ENCODE measurements at regions of chr17 and their contacts with region 1.

Region 1: GRCh38 chr17:47615766-47616424 is 33.8 kb upstream of the KPNB1 start:
- DNase-seq: no peak
- H3K4me3 Mint-ChIP-seq: no peak overlapping the region
- H3K27ac Mint-ChIP-seq: no peak overlapping the region
- H3K4me1 Mint-ChIP-seq: peaks cover 16% of the 10 kb centered on the region
- H3K27me3 Mint-ChIP-seq: no peaks in the 10 kb centered on the region

Region 2: DNA sequence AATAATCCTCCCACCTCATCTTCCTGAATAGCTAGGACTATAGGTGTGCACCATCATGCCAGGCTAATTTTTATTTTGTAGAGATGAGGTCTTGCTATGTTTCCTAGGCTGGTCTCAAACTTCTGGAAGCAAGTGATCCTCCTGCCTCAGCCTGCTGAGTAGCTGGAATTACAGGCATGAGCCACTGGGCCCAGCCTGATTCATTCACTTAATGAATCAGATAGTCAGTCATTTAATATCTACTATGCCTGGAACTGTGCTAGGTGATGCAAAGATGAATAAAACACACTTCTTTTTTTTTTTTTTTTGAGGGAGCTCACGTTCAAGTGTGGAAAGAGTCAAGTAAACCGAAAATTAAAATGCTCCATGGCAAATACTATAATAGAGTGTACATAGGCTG is 252.7 kb before region 1 on chr17:
- CTCF ChIA-PET with region 1: interaction called, 21 read pairs
- POLR2A ChIA-PET with region 1: no interaction called
- intact Hi-C with region 1: loop called (anchors 2 kb)
- DNase-seq: no peak
- H3K4me3 Mint-ChIP-seq: no peak overlapping the region
- H3K27ac Mint-ChIP-seq: no peak overlapping the region
- H3K4me1 Mint-ChIP-seq: no peaks in the 10 kb centered on the region
- H3K27me3 Mint-ChIP-seq: no peaks in the 10 kb centered on the region

Region 3: GRCh38 chr17:47644324-47644723 is 28.4 kb after region 1 on chr17:
- CTCF ChIA-PET with region 1: interaction called, 16 read pairs
- POLR2A ChIA-PET with region 1: interaction called, 4 read pairs
- intact Hi-C with region 1: loop called (anchors 1 kb)
- DNase-seq: no peak
- H3K4me3 Mint-ChIP-seq: no peak overlapping the region
- H3K27ac Mint-ChIP-seq: no peak overlapping the region
- H3K4me1 Mint-ChIP-seq: peaks cover 14% of the 10 kb centered on the region
- H3K27me3 Mint-ChIP-seq: no peaks in the 10 kb centered on the region

Region 4: DNA sequence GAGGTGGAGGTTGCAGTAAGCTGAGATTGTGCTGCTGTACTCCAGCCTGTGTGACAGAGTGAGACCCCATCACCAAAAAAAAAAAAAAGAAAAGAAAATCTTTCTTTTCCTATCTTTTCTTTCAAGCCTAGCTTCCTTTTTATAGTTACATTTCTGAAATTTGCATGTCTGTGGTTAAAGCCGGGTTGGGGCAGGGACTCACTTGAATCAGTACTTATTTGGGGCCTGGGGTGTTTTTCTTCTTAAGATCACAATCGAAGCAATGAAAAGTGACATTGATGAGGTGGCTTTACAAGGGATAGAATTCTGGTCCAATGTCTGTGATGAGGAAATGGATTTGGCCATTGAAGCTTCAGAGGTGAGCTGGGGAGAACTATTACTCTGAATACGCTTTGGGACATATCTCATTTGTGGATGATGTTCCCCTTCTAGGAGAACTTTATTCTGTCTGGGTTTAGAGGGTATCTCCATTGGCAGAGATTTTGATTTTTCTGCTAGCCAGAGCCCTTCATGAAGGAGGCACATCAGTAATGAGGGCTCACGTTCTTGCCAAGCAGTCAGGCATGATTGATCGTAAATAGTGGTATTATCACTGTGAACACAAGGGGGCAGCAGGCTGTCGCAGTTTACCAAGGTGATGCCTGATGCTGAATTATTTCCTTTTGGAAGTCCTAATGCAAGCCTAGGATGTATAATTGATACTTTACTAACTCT is 48.2 kb after region 1 on chr17:
- CTCF ChIA-PET with region 1: interaction called, 3 read pairs
- POLR2A ChIA-PET with region 1: no interaction called
- intact Hi-C with region 1: loop called (anchors 1 kb)
- DNase-seq: peak; percentile 71
- H3K4me3 Mint-ChIP-seq: no peak overlapping the region
- H3K27ac Mint-ChIP-seq: peak overlapping the region; percentile 80
- H3K4me1 Mint-ChIP-seq: peaks cover 31% of the 10 kb centered on the region
- H3K27me3 Mint-ChIP-seq: no peaks in the 10 kb centered on the region

Region 5: GRCh38 chr17:47687748-47688147 is 71.9 kb after region 1 on chr17:
- CTCF ChIA-PET with region 1: no interaction called
- POLR2A ChIA-PET with region 1: no interaction called
- intact Hi-C with region 1: no loop called
- DNase-seq: no peak
- H3K4me3 Mint-ChIP-seq: no peak overlapping the region
- H3K27ac Mint-ChIP-seq: no peak overlapping the region
- H3K4me1 Mint-ChIP-seq: peaks cover 30% of the 10 kb centered on the region
- H3K27me3 Mint-ChIP-seq: no peaks in the 10 kb centered on the region